Breast epithelium (tissue), 4 donors: ENCODE measurements at regions of chrX and their contacts with region 1.

Region 1: GRCh38 chrX:51855698-51856097 is 37.7 kb upstream of the MAGED1 start:
- DNase-seq: no peak
- H3K4me3 ChIP-seq: no peak overlapping the region
- H3K27ac ChIP-seq: no peak overlapping the region
- H3K4me1 ChIP-seq: no peaks in the 10 kb centered on the region
- H3K27me3 ChIP-seq: peaks cover 0 to 37% of the 10 kb centered on the region in 2 donors
- CTCF ChIP-seq: no peak
- POLR2A ChIP-seq: no peak

Region 2: GRCh38 chrX:51975811-51976210 is 120.1 kb after region 1 on chrX:
- intact Hi-C with region 1: loop called (anchors 5 kb)
- DNase-seq: no peak
- H3K4me3 ChIP-seq: no peak overlapping the region
- H3K27ac ChIP-seq: no peak overlapping the region
- H3K4me1 ChIP-seq: no peaks in the 10 kb centered on the region
- H3K27me3 ChIP-seq: peaks cover 0 to 31% of the 10 kb centered on the region in 2 donors
- CTCF ChIP-seq: no peak
- POLR2A ChIP-seq: no peak